ENCODE measurements at regions of chr6 and their contacts with region 1.

Region 1: DNA sequence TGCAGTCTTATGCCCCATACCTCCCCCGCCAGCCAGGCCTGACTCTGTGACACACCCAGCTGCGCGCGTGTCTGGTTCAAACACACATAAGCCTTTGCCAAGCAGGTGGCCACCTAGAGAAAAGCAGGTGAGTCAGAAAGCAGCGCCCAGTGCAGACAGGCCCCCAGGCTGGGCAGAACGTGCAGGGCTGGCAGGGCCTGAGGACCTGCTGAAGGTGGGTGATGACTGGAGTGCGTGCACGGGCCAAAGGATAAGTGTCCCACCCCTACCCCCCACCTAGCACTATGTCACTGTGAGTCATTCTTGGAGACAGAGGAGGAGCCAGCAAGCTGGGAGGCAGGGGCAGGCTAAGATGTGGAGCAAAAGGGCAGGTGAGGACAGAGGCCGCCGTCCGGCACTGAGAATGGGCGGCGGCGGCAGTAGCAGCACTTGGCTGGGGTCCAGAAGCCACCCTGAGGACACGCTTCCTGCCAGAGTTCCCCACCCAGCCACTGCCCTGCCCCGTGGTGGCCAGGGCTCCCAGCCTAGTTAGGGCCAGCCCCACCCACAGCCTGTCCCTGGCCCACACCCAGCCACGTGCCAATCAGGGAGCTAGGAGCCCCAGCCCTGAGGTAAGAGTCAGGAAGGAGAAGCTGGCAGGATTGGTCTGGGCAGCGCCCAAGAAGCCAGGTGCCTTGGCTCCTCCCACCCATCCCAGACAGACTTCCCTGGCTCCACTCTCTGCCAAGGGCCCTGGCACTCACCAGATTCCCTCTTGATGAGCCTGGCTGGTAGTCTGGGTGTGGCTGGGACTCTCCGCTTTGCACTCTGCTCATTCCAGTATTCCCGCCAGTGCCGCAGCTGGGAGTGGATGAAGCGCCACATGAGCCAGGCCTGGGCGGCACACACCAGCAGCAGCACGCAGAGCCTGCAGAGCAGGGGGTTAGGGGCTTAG is 72.7 kb downstream of the TRAM2 start:
- DNase-seq: peak; percentile 99
- H3K4me3 Mint-ChIP-seq: peak overlapping the region; percentile 28
- H3K27ac Mint-ChIP-seq: peak overlapping the region; percentile 61
- H3K4me1 Mint-ChIP-seq: peaks cover 34% of the 10 kb centered on the region
- H3K27me3 Mint-ChIP-seq: no peaks in the 10 kb centered on the region
- CTCF ChIP-seq: no peak

Region 2: GRCh38 chr6:52352239-52353008 is 151.7 kb before region 1 on chr6:
- CTCF ChIA-PET with region 1: no interaction called
- POLR2A ChIA-PET with region 1: no interaction called
- intact Hi-C with region 1: no loop called
- DNase-seq: peak; percentile 95
- H3K4me3 Mint-ChIP-seq: peak overlapping the region; percentile 58
- H3K27ac Mint-ChIP-seq: peak overlapping the region; percentile 97
- H3K4me1 Mint-ChIP-seq: peaks cover 16% of the 10 kb centered on the region
- H3K27me3 Mint-ChIP-seq: no peaks in the 10 kb centered on the region
- CTCF ChIP-seq: no peak

Region 3: GRCh38 chr6:52475307-52475706 is 28.8 kb before region 1 on chr6:
- CTCF ChIA-PET with region 1: no interaction called
- POLR2A ChIA-PET with region 1: no interaction called
- intact Hi-C with region 1: no loop called
- DNase-seq: no peak
- H3K4me3 Mint-ChIP-seq: no peak overlapping the region
- H3K27ac Mint-ChIP-seq: no peak overlapping the region
- H3K4me1 Mint-ChIP-seq: no peaks in the 10 kb centered on the region
- H3K27me3 Mint-ChIP-seq: no peaks in the 10 kb centered on the region
- CTCF ChIP-seq: no peak

Region 4: DNA sequence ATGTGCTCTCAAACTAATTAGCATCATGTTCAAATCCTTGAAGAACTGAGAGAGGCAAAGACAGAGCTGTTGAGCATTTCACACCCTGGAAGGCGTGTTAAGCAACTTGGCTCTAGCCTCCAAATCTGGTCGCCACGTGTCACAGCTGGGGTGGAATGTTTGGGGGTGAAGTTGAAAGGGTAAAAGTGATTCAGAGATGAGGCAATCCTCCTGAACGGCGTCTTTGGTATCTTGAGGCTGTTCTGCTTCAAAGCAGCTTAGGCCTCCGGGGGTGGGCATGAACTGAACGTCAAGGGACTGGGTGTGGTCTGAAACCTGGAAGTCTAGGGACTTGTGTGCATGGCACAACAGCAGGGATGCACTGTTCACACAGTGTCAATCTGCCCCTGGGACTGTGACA is 10.4 kb after region 1 on chr6:
- CTCF ChIA-PET with region 1: interaction called, 4 read pairs
- POLR2A ChIA-PET with region 1: interaction called, 45 read pairs
- intact Hi-C with region 1: no loop called
- DNase-seq: peak; percentile 92
- H3K4me3 Mint-ChIP-seq: no peak overlapping the region
- H3K27ac Mint-ChIP-seq: peak overlapping the region; percentile 74
- H3K4me1 Mint-ChIP-seq: peaks cover 67% of the 10 kb centered on the region
- H3K27me3 Mint-ChIP-seq: no peaks in the 10 kb centered on the region
- CTCF ChIP-seq: no peak

Region 5: DNA sequence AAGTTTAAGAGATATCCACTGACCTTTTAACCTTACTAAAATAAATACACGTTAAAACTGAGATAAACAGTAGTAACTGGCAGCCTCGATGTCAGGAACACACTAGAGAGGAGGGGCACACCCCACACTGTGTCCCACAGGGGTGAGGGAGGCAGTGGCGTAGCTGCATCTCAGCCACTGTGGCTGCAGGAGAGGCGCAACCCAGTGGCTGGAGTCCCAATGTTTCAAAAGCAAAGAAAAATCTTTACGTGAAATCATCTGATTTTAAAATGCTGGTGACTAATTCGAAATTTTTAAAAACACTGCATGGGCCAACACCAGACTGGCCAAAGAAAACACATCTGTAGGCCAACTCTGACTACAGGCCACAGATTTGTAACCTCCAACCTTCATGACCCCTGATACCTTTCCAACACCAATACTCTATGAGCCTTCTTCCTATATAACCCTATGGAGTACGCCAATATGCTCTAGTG is 18.1 kb after region 1 on chr6:
- CTCF ChIA-PET with region 1: interaction called, 3 read pairs
- POLR2A ChIA-PET with region 1: interaction called, 29 read pairs
- intact Hi-C with region 1: loop called (anchors 2 kb)
- DNase-seq: peak; percentile 74
- H3K4me3 Mint-ChIP-seq: peak overlapping the region; percentile 18
- H3K27ac Mint-ChIP-seq: peak overlapping the region; percentile 83
- H3K4me1 Mint-ChIP-seq: peaks cover 64% of the 10 kb centered on the region
- H3K27me3 Mint-ChIP-seq: no peaks in the 10 kb centered on the region
- CTCF ChIP-seq: no peak

Region 6: DNA sequence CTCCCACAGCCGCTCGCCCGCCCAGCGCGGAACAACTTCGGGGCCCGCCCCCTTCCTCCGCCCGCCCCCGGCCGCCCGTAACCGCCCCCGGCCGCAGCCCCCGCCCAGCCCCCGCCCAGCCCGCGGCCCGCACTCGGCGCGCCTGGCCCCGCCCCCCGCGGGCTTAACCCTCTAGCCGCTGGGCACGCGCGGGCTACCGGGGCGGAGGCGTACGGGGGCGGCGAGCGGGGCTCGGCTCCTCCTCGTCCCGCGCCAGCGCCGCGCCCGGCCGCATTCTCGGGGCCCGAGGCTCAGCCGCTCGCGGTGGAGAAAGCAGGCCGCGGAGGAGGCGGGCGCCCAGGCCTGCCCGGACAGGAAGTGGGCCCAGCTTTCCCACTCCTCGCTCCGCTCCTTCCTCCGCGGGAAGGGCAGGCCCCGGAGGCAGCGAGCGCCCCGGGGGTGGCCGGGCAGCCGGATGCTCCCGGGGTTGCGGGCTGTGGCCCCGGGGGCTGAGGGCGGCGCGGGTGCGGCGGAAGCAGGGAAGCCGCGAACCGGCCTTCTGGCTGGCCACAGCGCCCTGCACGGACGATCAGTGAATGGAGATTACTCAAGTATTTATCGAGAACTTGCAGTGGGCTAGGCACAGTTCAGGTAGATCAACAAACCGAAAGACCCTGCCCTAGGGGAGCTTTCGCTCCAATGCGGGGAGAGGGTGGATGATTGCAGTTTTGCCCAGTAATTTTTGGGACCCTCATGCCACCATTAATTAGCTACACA is 73.1 kb after region 1 on chr6 and contains the start of gene TRAM2:
- CTCF ChIA-PET with region 1: interaction called, 4 read pairs
- POLR2A ChIA-PET with region 1: interaction called, 19 read pairs
- intact Hi-C with region 1: loop called (anchors 2 kb)
- DNase-seq: peak; percentile 73
- H3K4me3 Mint-ChIP-seq: peak within 1 kb of the TSS; percentile 69
- H3K27ac Mint-ChIP-seq: peak within 1 kb of the TSS; percentile 85
- H3K4me1 Mint-ChIP-seq: peaks cover 31% of the 10 kb centered on the region
- H3K27me3 Mint-ChIP-seq: no peaks in the 10 kb centered on the region
- CTCF ChIP-seq: peak; percentile 26
- total RNA-seq, gene TRAM2: 9.9 and 10.1 TPM in 2 replicates

Region 7: DNA sequence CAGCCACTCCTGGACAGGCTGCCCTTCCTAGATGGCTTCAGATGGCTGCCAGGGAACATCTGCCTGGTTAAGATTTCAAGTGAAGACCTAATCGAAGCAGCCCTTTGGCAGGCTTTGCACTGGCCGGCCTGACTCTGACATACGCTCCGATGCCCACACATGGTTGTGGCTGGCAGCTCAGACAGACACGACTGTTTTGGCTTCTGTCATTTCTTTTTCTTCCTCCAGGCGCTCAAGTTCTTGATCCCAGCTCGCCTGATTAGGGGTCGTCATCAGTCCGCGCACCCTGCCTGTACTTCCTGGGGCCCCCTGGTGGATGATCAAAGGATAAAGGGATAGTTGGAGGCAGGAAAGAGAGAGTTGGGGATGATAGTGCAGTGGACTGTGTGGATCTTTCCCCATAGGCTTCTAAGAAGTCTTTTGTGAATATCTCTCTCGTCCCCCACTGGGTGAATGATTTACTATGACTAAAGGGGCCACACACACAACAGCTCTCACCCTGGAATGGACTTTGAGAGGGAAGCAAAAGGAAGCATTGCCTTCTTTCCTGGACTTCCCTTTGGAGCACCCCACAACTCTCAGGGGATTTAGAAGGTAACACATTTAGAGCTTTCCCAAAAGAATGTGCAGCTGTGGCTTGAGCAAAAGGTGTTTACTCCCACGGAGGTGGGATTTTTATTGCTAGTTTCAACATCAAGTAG is 94.2 kb after region 1 on chr6:
- CTCF ChIA-PET with region 1: interaction called, 3 read pairs
- POLR2A ChIA-PET with region 1: interaction called, 5 read pairs
- intact Hi-C with region 1: loop called (anchors 5 kb)
- DNase-seq: peak; percentile 52
- H3K4me3 Mint-ChIP-seq: no peak overlapping the region
- H3K27ac Mint-ChIP-seq: no peak overlapping the region
- H3K4me1 Mint-ChIP-seq: peaks cover 22% of the 10 kb centered on the region
- H3K27me3 Mint-ChIP-seq: no peaks in the 10 kb centered on the region
- CTCF ChIP-seq: peak; percentile 39